ENCODE measurements at regions of chr12 and their contacts with region 1.

Region 1: GRCh38 chr12:82383930-82384552 is 25.7 kb downstream of the METTL25 start:
- DNase-seq: no peak
- H3K4me3 ChIP-seq: no peak overlapping the region
- H3K27ac ChIP-seq: no peak overlapping the region
- H3K27me3 ChIP-seq: no peaks in the 10 kb centered on the region
- CTCF ChIP-seq: peak; percentile 21 to 77 (median 62)

Region 2: GRCh38 chr12:82326905-82327503 is 57.0 kb before region 1 on chr12:
- intact Hi-C with region 1: no loop called
- DNase-seq: no peak
- H3K4me3 ChIP-seq: no peak overlapping the region
- H3K27ac ChIP-seq: no peak overlapping the region
- H3K27me3 ChIP-seq: no peaks in the 10 kb centered on the region
- CTCF ChIP-seq: peak; percentile 45 to 86 (median 68)

Region 3: DNA sequence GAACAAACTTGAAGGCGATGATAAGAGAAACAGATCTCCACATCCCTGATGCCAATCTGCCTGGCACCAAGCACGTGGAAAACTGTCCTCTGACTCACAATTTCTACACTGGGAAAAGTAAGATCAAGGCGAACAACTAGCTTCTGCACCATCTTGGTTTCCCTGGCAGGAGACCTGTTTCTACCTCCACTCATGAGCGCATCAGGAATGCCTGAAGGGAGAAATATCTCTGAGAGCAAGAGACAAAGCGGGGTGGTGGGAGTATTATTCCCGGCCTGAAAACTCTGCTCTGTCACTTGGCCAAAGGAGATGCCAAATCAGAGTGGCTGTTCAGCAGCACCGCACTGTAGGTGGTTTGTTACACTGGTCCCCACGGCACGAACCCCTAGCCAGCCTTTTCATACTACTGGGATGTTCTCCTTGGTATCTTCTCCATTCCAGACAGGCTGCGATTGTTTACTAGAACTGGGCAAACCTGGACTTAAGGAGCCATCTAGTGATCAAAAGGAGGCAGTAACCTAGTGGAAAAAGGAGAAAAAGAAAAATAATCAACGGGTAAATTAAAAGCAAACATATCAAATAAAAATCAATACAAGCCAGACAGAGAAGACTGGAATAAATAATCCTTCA is 243.6 kb after region 1 on chr12:
- intact Hi-C with region 1: loop called in 1 of 2 experiments (anchors 10 kb)
- DNase-seq: peak in 1 of 10 donors; percentile 17
- H3K4me3 ChIP-seq: no peak overlapping the region
- H3K27ac ChIP-seq: peak overlapping the region in 27 of 59 donors; percentile 0 to 98 (median 93)
- H3K27me3 ChIP-seq: no peaks in the 10 kb centered on the region
- CTCF ChIP-seq: peak in 54 of 56 donors; percentile 15 to 68 (median 46)